CD4-positive, alpha-beta memory T cell (primary cell): ENCODE measurements at regions of chr1 and their contacts with region 1.

Region 1: GRCh38 chr1:27940297-27940696 is 5.5 kb downstream of the SMPDL3B start:
- DNase-seq: peak; percentile 71 to 73 (median 73)
- H3K4me3 ChIP-seq: no peak overlapping the region
- H3K4me3 Mint-ChIP-seq: no peak overlapping the region
- H3K27ac ChIP-seq: no peak overlapping the region
- H3K27ac Mint-ChIP-seq: peak overlapping the region; percentile 68 to 92 (median 87)
- H3K4me1 ChIP-seq: peaks cover 34% of the 10 kb centered on the region
- H3K4me1 Mint-ChIP-seq: peaks cover 22 to 55% (median 37%) of the 10 kb centered on the region in 4 donors
- H3K27me3 ChIP-seq: no peaks in the 10 kb centered on the region
- H3K27me3 Mint-ChIP-seq: peaks cover 2 to 3% of the 10 kb centered on the region in 2 donors

Region 2: DNA sequence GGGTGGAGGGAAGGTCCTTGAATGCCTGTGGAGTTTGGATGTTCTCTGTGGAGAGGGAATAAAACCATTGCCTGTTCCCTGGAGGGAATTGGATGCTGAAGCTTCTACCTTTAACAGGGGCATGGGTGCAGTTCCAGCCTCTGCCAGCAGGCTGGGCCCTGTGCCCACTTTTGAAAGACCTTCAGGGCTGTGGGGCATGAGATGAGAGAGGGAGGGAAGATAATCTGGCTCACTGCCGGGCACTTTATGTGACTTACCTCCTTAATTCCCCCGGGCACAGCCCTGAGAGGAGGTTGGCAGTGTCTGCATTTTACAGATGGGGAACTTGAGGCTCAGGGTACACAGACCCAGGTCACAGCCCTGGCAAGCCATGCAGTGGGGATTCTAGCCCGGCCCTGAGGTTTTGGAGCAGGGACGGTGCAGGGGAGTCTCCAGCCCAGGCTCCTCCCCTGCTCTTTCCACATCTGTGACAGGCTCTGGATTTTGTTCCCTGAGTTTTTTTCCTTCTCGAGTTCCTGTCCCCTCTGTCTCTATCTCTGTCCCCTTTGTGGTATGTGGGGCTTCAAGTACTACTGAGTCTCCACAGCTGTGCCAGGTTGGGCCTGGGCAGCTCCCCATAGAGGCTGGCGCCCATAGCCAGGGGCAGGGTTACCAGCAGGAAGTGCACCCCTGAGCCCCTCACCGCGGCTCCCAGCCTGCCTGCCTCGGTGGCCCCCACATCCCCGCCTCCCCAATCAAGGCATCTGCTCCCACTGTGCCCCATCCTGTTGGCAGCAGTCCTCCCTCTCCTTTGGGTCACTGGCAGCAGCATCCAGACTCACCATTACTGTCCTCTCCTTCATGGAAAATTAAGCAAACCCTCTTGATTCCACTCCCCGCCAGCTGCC is 82.0 kb before region 1 on chr1:
- CTCF ChIA-PET with region 1: interaction called, 15 read pairs
- POLR2A ChIA-PET with region 1: interaction called, 4 read pairs
- intact Hi-C with region 1: loop called (anchors 2 kb)
- DNase-seq: peak; percentile 77 to 81 (median 79)
- H3K4me3 ChIP-seq: no peak overlapping the region
- H3K4me3 Mint-ChIP-seq: peak overlapping the region in 2 of 8 donors; percentile 16 to 43
- H3K27ac ChIP-seq: no peak overlapping the region
- H3K27ac Mint-ChIP-seq: peak overlapping the region in 3 of 7 donors; percentile 15 to 65 (median 43)
- H3K4me1 ChIP-seq: peaks cover 14% of the 10 kb centered on the region
- H3K4me1 Mint-ChIP-seq: peaks cover 13 to 28% (median 17%) of the 10 kb centered on the region in 4 donors
- H3K27me3 ChIP-seq: no peaks in the 10 kb centered on the region
- H3K27me3 Mint-ChIP-seq: no peaks in the 10 kb centered on the region

Region 3: DNA sequence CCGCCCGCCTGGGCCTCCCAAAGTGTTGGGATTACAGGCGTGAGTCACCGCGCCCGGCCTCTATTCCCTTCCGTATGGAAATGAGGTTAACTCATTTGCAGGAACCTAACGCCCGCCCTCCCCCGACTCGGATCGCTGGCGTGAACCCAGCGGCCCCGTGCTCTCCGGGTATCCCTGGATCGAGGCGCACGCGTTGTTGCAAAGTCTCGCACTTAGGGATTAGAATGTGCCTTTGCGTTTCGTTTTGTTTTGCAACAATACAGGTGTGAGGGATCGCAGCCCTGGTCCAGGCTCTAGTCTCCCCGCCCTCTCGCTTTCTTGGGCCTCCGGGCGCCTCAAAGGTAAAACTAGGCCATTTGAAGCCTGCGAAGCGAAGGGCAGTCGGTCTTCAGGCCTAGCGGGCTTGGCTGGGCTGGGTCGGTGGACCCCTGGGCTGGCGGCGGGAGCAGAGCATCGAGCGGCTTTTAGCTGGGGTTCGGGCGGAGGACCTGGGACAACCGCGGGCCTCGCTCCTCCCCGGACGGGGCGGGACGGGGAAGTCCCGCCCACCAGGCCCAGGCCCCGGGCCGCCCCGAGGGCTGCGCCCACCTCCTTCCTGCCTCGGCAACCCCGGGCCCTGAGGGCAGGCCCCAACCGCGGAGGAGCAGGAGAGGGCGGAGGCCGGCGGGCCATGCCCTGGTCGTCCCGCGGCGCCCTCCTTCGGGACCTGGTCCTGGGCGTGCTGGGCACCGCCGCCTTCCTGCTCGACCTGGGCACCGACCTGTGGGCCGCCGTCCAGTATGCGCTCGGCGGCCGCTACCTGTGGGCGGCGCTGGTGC is 19.3 kb after region 1 on chr1 and contains the start of gene XKR8:
- CTCF ChIA-PET with region 1: interaction called, 30 read pairs
- POLR2A ChIA-PET with region 1: interaction called, 41 read pairs
- intact Hi-C with region 1: no loop called
- DNase-seq: peak; percentile 84 to 88 (median 85)
- H3K4me3 ChIP-seq: peak within 1 kb of the TSS; percentile 63 to 73
- H3K4me3 Mint-ChIP-seq: peak within 1 kb of the TSS; percentile 87 to 92 (median 89)
- H3K27ac ChIP-seq: peak within 1 kb of the TSS; percentile 83
- H3K27ac Mint-ChIP-seq: peak within 1 kb of the TSS; percentile 81 to 94 (median 92)
- H3K4me1 ChIP-seq: peaks cover 32% of the 10 kb centered on the region
- H3K4me1 Mint-ChIP-seq: peaks cover 17 to 40% (median 25%) of the 10 kb centered on the region in 4 donors
- H3K27me3 ChIP-seq: no peaks in the 10 kb centered on the region
- H3K27me3 Mint-ChIP-seq: no peaks in the 10 kb centered on the region
- total RNA-seq, gene XKR8: 13.1 to 14.5 TPM

Region 4: GRCh38 chr1:27979151-27979858 is 39.0 kb after region 1 on chr1:
- CTCF ChIA-PET with region 1: interaction called, 90 read pairs
- POLR2A ChIA-PET with region 1: interaction called, 7 read pairs
- intact Hi-C with region 1: loop called (anchors 1 kb)
- DNase-seq: peak in 4 of 5 donors; percentile 49 to 56 (median 53)
- H3K4me3 ChIP-seq: no peak overlapping the region
- H3K4me3 Mint-ChIP-seq: no peak overlapping the region
- H3K27ac ChIP-seq: no peak overlapping the region
- H3K27ac Mint-ChIP-seq: no peak overlapping the region
- H3K4me1 ChIP-seq: no peaks in the 10 kb centered on the region
- H3K4me1 Mint-ChIP-seq: no peaks in the 10 kb centered on the region
- H3K27me3 ChIP-seq: no peaks in the 10 kb centered on the region
- H3K27me3 Mint-ChIP-seq: no peaks in the 10 kb centered on the region

Region 5: GRCh38 chr1:28088168-28088961 is 148.1 kb after region 1 on chr1 and contains the start of gene EYA3:
- CTCF ChIA-PET with region 1: interaction called, 4 read pairs
- POLR2A ChIA-PET with region 1: interaction called, 4 read pairs
- intact Hi-C with region 1: loop called (anchors 2 kb)
- DNase-seq: peak; percentile 98 to 100 (median 99)
- H3K4me3 ChIP-seq: peak within 1 kb of the TSS; percentile 93 to 99
- H3K4me3 Mint-ChIP-seq: peak within 1 kb of the TSS; percentile 93 to 98 (median 96)
- H3K27ac ChIP-seq: peak within 1 kb of the TSS; percentile 81
- H3K27ac Mint-ChIP-seq: peak within 1 kb of the TSS; percentile 87 to 99 (median 98)
- H3K4me1 ChIP-seq: peaks cover 33% of the 10 kb centered on the region
- H3K4me1 Mint-ChIP-seq: peaks cover 22 to 48% (median 36%) of the 10 kb centered on the region in 4 donors
- H3K27me3 ChIP-seq: no peaks in the 10 kb centered on the region
- H3K27me3 Mint-ChIP-seq: no peaks in the 10 kb centered on the region
- total RNA-seq, gene EYA3: 21.1 to 22.6 TPM